OCI-LY7 (cell line): ENCODE measurements at regions of chr11 and their contacts with region 1.

Region 1: DNA sequence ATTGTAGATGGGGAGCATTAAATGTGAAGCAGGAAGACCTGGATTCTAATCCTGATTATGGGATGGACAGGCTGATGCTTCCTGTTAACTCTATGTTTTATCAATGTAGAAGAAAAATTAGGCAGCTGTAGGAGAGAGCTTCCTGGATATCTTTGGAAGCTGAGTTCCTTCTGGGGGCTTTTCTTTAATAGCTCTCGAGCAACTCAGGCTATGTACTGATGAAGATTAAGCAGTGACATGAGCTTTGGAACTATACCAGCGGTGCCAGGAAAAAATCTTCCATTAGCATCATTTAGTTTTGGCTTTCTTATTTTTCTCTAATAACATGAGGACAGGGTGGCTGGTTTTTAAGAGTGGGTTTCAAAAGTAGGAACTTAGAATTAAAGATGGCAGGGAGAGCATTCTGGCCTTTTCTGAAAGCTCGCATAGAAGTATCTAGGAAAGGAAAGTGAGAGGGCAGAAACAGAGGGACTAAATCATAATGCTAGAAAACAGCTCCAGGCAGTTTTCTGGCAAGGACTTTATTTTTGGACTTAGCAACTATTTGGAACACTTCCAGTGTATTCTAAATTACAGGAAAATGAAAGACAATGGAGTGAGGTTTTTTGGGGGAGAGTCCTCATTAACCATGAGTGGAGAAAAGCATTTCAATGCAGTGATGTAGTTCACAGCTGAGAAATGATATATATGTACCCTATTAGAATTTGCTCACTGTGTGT is 69.2 kb upstream of the RRM1 start:
- DNase-seq: no peak
- H3K4me3 ChIP-seq: no peak overlapping the region
- H3K27ac ChIP-seq: no peak overlapping the region
- H3K4me1 ChIP-seq: no peaks in the 10 kb centered on the region
- CTCF ChIP-seq: no peak

Region 2: GRCh38 chr11:4006946-4007680 is 18.3 kb before region 1 on chr11:
- CTCF ChIA-PET with region 1: no interaction called
- POLR2A ChIA-PET with region 1: interaction called, 11 read pairs
- intact Hi-C with region 1: no loop called
- DNase-seq: no peak
- H3K4me3 ChIP-seq: no peak overlapping the region
- H3K27ac ChIP-seq: no peak overlapping the region
- H3K4me1 ChIP-seq: no peaks in the 10 kb centered on the region
- CTCF ChIP-seq: no peak

Region 3: DNA sequence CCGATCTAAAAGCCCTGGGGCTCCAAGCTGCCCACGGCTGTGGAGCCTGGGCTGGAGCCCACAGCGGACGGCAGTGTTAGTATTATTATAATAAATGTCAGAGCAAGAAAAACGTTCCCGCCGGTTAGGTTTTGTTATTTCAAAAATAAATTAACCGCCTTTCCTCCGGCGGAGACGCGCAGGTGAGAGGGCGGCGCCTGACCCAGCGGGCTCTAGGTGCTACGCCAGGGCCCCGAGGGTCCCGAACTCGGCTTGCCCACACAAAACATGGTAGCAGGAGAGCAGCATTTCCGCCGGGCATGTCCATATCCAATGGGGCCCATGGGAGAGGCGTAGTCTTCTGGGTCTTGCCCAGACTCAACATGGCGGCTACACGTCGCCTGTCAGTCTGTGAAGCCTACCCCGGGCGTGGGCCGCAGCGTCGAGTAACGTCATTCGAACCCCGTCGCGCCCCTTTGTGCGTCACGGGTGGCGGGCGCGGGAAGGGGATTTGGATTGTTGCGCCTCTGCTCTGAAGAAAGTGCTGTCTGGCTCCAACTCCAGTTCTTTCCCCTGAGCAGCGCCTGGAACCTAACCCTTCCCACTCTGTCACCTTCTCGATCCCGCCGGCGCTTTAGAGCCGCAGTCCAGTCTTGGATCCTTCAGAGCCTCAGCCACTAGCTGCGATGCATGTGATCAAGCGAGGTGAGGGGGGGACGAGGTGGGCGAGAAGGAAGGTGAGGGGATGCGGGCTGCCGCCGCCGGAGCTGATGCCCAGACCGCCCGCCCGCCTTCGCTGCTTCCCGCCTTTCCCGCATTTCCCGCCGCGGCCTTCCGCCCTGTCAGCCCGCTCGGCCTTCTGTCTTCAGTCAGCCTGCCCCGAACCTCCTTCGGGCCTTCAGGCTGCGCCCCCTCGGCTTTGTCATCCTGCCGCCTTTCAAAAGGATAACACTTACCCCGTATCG is 69.2 kb after region 1 on chr11 and contains the start of gene RRM1:
- CTCF ChIA-PET with region 1: no interaction called
- POLR2A ChIA-PET with region 1: no interaction called
- intact Hi-C with region 1: no loop called
- DNase-seq: peak; percentile 97
- H3K4me3 ChIP-seq: peak within 1 kb of the TSS; percentile 97
- H3K27ac ChIP-seq: peak within 1 kb of the TSS; percentile 72
- H3K4me1 ChIP-seq: peaks cover 40% of the 10 kb centered on the region
- CTCF ChIP-seq: no peak
- total RNA-seq, gene RRM1: 122 and 123 TPM in 2 replicates